Panc1 (cell line): ENCODE measurements at regions of chr10 and their contacts with region 1.

Region 1: DNA sequence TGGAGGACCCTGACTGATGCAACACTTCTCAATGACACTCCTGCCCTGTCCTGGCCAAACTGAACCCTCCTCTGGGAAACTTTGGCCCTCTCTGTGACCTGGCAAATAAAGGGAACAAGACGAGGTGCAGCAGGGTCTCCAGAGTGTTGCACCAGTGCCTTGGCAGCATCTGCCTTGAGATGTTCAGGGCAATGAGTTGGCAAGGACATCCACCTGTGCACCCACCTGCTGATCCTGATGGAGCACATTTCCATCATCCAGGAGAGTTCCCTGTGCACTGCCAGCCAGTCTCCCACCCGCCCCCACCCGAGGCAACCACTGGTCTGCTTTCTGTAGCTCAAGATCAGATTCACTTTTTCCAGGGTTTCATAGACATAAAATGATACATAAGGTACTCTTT is 407.4 kb downstream of the GRID1 start:
- DNase-seq: no peak
- ATAC-seq: no peak
- H3K4me3 ChIP-seq: no peak overlapping the region
- H3K27ac ChIP-seq: no peak overlapping the region
- H3K4me1 ChIP-seq: no peaks in the 10 kb centered on the region
- H3K27me3 ChIP-seq: no peaks in the 10 kb centered on the region; the same call in none of the 2 replicates
- CTCF ChIP-seq: no peak

Region 2: DNA sequence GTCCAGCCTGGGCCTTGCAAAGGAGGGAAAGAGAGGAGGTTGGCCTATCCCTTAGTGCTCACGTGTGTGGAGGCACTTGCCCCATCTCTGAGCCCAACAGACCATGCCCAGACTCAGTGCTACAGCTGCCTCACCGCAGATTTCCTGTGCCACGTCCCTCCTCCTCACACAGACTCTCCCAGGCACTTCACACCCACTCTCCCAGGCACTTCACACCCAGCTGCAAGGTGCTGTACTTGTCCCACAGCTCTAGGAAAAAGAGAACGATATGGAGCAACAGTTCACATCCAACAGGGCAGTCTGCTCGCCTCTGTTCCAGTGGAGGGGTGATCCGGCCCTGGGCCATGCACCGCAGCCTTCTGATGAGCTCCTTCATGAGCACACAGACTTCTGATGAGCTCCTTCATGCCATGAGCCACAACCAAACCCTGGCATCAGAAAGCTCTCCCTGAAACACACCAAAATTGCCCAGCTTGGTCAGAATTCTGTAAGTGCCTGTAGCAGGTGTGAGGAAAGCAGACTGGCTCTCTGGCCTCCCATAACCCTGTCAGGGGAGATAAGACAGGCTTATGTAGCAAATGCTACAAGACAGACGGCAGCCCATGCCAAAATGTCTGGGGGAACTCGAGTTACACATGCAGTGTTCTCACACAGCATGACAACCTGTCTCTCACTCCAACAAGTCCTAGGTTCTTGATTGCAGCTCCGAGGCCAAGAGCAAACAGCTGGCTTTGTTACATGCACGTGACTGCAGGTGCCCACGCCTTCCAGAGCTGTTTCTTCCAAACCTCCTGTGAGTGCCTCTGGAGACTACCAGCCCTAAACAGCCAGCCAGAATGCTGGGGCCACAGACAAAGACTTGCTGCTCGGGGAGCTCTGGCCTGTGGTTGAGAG is 58.8 kb after region 1 on chr10:
- CTCF ChIA-PET with region 1: interaction called, 10 read pairs
- POLR2A ChIA-PET with region 1: no interaction called
- in situ Hi-C with region 1: no loop called
- intact Hi-C with region 1: no loop called
- DNase-seq: no peak
- ATAC-seq: no peak
- H3K4me3 ChIP-seq: no peak overlapping the region
- H3K27ac ChIP-seq: no peak overlapping the region
- H3K4me1 ChIP-seq: no peaks in the 10 kb centered on the region
- H3K27me3 ChIP-seq: no peaks in the 10 kb centered on the region
- CTCF ChIP-seq: no peak